ENCODE measurements at regions of chr1 and their contacts with region 1.

Region 1: GRCh38 chr1:28751315-28752060 is 14.7 kb downstream of the YTHDF2 start:
- DNase-seq: peak; percentile 15
- H3K4me3 ChIP-seq: no peak overlapping the region
- H3K27ac ChIP-seq: peak overlapping the region; percentile 32
- H3K4me1 ChIP-seq: peaks cover 25% of the 10 kb centered on the region
- H3K27me3 ChIP-seq: no peaks in the 10 kb centered on the region
- CTCF ChIP-seq: no peak

Region 2: DNA sequence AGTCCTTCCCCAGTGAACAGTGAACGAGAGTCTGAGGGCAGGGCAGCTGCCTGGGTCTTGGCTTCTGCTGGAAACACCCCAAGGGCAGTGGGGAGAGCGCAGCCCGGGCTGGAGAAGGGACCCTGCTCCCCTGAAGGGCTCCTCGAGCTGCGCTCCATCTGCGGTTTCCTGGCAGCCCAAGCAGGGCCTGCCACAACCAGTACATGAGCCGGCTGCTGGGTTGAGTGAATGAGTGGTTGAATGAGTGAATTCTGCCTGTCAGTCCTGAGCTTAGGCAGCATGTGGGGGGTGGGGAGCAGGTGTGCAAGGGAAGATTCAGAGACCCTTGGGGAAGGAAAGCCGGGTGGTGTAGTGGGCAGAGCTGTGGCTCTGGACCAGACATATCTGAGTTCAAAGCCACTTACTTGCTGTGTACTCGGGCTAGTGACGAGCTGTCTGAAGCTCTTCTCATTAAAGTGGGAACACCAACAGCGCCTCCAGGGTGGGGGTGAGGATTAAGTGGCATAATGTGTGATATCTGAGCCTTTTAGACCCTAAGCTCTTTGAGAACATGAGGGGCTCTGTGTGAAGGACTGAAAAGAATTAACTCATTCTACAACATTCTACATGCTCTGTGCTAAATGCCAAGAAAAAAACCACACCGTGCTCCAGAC is 64.2 kb after region 1 on chr1:
- CTCF ChIA-PET with region 1: no interaction called
- dilution Hi-C with region 1: loop called (anchors 5 kb)
- in situ Hi-C with region 1: no loop called
- intact Hi-C with region 1: no loop called
- DNase-seq: no peak
- H3K4me3 ChIP-seq: no peak overlapping the region
- H3K27ac ChIP-seq: no peak overlapping the region
- H3K4me1 ChIP-seq: peaks cover 4% of the 10 kb centered on the region
- H3K27me3 ChIP-seq: peaks cover 21% of the 10 kb centered on the region
- CTCF ChIP-seq: no peak

Measured in mammary epithelial cell (primary cell).